ENCODE measurements at regions of chr1 and their contacts with region 1.

Region 1: GRCh38 chr1:171623651-171624331 is 1.7 kb downstream of the MYOCOS start:
- DNase-seq: no peak
- ATAC-seq: no peak
- H3K4me3 ChIP-seq: no peak overlapping the region
- H3K27ac ChIP-seq: no peak overlapping the region
- H3K4me1 ChIP-seq: peaks cover 6% of the 10 kb centered on the region; the same call in 1 of the 2 replicates
- H3K27me3 ChIP-seq: no peaks in the 10 kb centered on the region
- CTCF ChIP-seq: no peak
- EP300 ChIP-seq: no peak
- POLR2A ChIP-seq: no peak
- RAD21 ChIP-seq: no peak

Region 2: DNA sequence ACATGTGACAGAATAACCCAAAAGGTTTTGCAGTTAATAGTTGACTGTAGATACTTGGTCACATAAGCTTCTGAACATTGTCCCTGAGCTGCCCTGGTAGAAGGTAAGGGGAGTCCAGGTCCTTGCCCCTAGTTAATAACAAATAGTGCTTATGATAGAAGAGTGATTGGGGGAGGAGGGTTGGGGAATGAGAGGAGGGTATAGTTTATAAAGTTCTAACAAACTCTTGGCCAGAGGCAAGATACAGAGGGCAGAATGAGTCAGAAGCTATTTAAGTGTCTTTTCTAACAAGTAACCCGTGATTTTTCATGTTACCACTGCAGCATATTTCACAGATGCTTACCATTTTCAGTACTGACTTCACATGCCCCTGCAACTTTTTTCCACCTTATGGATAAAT is 28.5 kb before region 1 on chr1:
- CTCF ChIA-PET with region 1: no interaction called
- POLR2A ChIA-PET with region 1: interaction called, 13 read pairs
- RAD21 ChIA-PET with region 1: interaction called, 8 read pairs
- SMC1A ChIA-PET with region 1: interaction called, 37 read pairs
- in situ Hi-C with region 1: no loop called
- intact Hi-C with region 1: no loop called
- DNase-seq: no peak
- ATAC-seq: peak; percentile 70
- H3K4me3 ChIP-seq: no peak overlapping the region
- H3K27ac ChIP-seq: no peak overlapping the region
- H3K4me1 ChIP-seq: no peaks in the 10 kb centered on the region
- H3K27me3 ChIP-seq: no peaks in the 10 kb centered on the region
- CTCF ChIP-seq: no peak
- EP300 ChIP-seq: 0 out of 4 replicates have a peak, but pooled peaks have one; percentile 27 to 54
- POLR2A ChIP-seq: no peak
- RAD21 ChIP-seq: no peak

Region 3: GRCh38 chr1:171610385-171610784 is 13.4 kb before region 1 on chr1:
- CTCF ChIA-PET with region 1: interaction called, 15 read pairs
- POLR2A ChIA-PET with region 1: interaction called, 6 read pairs
- RAD21 ChIA-PET with region 1: interaction called, 5 read pairs
- SMC1A ChIA-PET with region 1: interaction called, 78 read pairs
- in situ Hi-C with region 1: no loop called
- intact Hi-C with region 1: no loop called
- DNase-seq: no peak
- ATAC-seq: peak; percentile 74
- H3K4me3 ChIP-seq: no peak overlapping the region
- H3K27ac ChIP-seq: no peak overlapping the region
- H3K4me1 ChIP-seq: peaks cover 5% of the 10 kb centered on the region
- H3K27me3 ChIP-seq: no peaks in the 10 kb centered on the region
- CTCF ChIP-seq: no peak
- EP300 ChIP-seq: peak; percentile 38 to 68; a peak in 3 of 4 replicates
- POLR2A ChIP-seq: no peak
- RAD21 ChIP-seq: no peak

Region 4: GRCh38 chr1:171636141-171636540 is 12.3 kb after region 1 on chr1:
- CTCF ChIA-PET with region 1: interaction called, 4 read pairs
- POLR2A ChIA-PET with region 1: interaction called, 3 read pairs
- RAD21 ChIA-PET with region 1: interaction called, 5 read pairs
- SMC1A ChIA-PET with region 1: interaction called, 13 read pairs
- in situ Hi-C with region 1: no loop called
- intact Hi-C with region 1: no loop called
- DNase-seq: no peak
- ATAC-seq: no peak
- H3K4me3 ChIP-seq: no peak overlapping the region
- H3K27ac ChIP-seq: no peak overlapping the region
- H3K4me1 ChIP-seq: no peaks in the 10 kb centered on the region
- H3K27me3 ChIP-seq: peaks cover 0 to 4% of the 10 kb centered on the region in 2 experiments; a peak in 1 of 4 replicates
- CTCF ChIP-seq: no peak
- EP300 ChIP-seq: no peak
- POLR2A ChIP-seq: no peak
- RAD21 ChIP-seq: no peak

Region 5: DNA sequence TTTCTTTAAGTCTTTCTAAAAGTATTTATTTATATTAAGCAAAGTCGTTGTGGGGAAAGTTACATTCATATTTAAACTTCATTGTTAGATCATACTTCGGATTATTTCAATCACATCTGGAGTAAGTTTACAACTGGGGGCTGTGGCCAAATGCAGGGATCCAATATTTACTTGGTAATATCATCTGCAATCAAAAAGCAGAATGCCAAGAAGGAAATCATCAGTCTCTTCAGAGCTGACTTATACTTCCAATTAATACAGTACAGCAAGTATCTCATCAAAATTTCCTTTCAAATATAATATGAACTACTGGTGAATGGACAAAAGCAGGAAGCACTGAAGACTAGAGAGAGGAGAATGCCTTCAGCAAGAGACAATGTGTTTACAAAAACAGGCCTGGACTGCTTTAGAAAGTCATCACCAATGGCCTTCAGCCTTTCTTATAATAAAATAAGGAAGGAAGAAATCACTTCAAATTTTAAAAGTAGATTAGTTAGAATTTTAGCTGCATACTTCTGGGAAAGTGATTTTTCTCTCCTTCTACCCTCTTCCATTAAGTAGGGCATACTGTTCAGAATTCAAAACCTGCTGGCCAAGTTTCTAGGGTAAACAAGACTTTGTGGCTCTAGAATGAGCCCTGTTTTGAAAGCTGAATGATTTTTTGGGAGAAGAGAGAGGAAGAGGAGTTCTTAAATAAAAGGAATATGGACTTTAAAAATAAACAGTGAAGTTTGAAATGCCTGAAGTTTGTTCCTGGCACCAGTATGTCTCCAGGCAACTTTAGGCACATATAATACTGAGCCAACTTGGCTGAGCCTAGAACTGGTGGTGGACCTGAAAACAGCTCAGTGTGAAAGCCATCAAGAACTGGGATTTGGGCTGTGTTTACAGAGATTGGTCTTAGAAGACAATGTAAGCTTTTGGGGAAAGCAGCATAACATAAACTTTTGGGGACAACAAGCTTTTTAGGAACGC is 50.9 kb after region 1 on chr1:
- CTCF ChIA-PET with region 1: no interaction called
- POLR2A ChIA-PET with region 1: no interaction called
- RAD21 ChIA-PET with region 1: no interaction called
- SMC1A ChIA-PET with region 1: no interaction called
- in situ Hi-C with region 1: no loop called
- intact Hi-C with region 1: no loop called
- DNase-seq: no peak
- ATAC-seq: no peak
- H3K4me3 ChIP-seq: no peak overlapping the region
- H3K27ac ChIP-seq: no peak overlapping the region
- H3K4me1 ChIP-seq: no peaks in the 10 kb centered on the region
- H3K27me3 ChIP-seq: no peaks in the 10 kb centered on the region; a peak in 1 of 4 replicates
- CTCF ChIP-seq: no peak
- EP300 ChIP-seq: no peak
- POLR2A ChIP-seq: no peak
- RAD21 ChIP-seq: no peak

Region 6: DNA sequence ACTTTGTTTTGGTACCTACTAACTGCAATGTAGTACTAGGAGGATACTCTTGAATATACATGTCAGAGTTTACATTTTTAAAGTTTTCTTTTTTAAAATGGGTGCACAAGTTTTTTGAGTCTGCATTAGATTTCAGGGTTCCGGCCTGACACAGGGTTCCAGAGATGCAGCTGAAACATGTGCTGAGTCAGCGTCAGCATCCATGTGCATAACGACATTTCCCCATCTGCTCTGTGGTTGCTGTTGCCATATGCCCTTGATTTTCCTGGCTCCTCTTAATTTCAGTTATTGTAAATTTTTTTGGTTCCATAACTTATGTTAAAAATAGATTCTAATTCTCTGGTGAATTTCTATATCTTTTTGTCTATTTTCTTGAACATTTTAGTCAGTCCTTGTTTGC is 145.4 kb after region 1 on chr1:
- CTCF ChIA-PET with region 1: no interaction called
- POLR2A ChIA-PET with region 1: no interaction called
- RAD21 ChIA-PET with region 1: no interaction called
- SMC1A ChIA-PET with region 1: no interaction called
- in situ Hi-C with region 1: no loop called
- intact Hi-C with region 1: no loop called
- DNase-seq: no peak
- ATAC-seq: no peak
- H3K4me3 ChIP-seq: no peak overlapping the region
- H3K27ac ChIP-seq: no peak overlapping the region
- H3K4me1 ChIP-seq: no peaks in the 10 kb centered on the region
- H3K27me3 ChIP-seq: no peaks in the 10 kb centered on the region
- CTCF ChIP-seq: no peak
- EP300 ChIP-seq: no peak
- POLR2A ChIP-seq: no peak
- RAD21 ChIP-seq: no peak

Measured in GM12878 (cell line).